SK-N-SH (cell line): ENCODE measurements at regions of chr10 and their contacts with region 1.

Region 1: DNA sequence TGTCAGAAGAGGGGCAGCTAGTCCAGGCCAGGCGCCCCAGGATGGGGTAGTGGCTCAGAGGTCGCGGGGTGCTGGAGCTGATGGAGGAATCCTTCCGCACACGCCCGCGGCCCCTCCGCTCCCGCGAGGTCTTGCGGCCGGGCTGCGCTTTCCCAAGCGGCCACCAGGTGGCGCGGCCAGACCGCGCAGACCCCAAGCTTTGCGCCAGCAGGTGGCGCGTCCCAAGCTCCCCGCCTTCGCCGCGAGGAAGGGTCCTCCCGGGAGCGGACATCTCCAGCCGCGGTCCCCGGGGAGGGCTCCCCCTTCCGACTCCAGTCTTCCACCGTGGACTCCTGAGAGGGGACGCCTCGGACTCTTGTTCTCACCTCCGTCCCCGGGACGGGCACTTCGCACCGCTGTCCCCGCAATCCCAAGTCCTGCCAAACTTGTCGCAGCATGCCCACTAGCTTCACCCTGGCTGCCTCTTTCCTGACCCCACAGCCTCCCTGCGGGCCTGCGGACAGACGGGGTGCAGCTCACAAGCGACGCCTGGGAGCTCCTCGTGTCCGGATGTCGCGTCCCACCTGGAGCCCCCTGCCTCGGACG is 19.4 kb downstream of the KCNK18 start:
- DNase-seq: peak; percentile 94
- H3K4me3 ChIP-seq: peak overlapping the region; percentile 59 to 66
- H3K27ac ChIP-seq: no peak overlapping the region
- H3K4me1 ChIP-seq: peaks cover 0 to 17% of the 10 kb centered on the region in 2 experiments; a peak in 1 of 4 replicates
- H3K27me3 ChIP-seq: no peaks in the 10 kb centered on the region
- CTCF ChIP-seq: peak; percentile 94
- EP300 ChIP-seq: no peak
- RAD21 ChIP-seq: peak; percentile 90

Region 2: DNA sequence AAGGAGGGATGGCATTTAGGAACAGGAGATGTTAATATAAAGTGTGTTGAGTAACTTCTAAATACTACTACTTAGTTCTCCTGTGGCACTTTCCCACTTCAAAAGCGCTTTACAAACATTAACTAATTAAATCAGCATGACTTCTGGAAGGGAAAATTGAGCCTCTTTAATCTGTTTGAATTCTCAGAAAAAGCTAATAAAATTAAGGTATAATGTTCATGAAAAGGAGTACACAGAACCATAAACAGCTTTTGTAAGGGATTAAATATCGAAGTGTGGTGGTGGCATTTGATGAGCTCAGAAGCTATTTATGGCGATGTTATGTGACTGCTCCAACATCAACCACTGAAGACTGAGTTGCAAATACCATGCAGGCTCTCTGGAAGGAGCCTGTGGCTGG is 68.4 kb before region 1 on chr10:
- CTCF ChIA-PET with region 1: no interaction called
- POLR2A ChIA-PET with region 1: no interaction called
- DNase-seq: no peak
- H3K4me3 ChIP-seq: no peak overlapping the region
- H3K27ac ChIP-seq: no peak overlapping the region
- H3K4me1 ChIP-seq: no peaks in the 10 kb centered on the region; a peak in 1 of 4 replicates
- H3K27me3 ChIP-seq: peaks cover 3% of the 10 kb centered on the region; the same call in 1 of the 2 replicates
- CTCF ChIP-seq: no peak
- EP300 ChIP-seq: no peak
- RAD21 ChIP-seq: no peak

Region 3: DNA sequence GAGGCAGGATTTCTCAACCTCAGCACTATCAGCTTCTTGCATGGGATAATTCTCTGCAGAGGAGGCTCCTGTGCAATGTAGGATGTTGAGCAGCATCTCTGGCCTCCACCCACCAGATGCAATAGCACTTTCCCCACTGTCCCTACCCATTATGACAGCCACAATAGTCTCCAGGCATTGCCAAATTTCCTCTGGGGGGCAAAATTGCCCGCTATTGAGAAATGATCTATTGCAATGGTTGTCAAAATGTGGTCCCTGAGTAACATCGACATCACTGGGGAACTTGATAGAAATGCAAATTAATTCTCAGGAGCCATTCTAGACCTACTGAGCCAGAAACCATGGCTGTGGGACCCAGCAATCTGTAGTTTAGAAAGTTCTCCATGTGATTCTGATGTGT is 12.4 kb before region 1 on chr10:
- CTCF ChIA-PET with region 1: interaction called, 71 read pairs
- POLR2A ChIA-PET with region 1: interaction called, 3 read pairs
- DNase-seq: no peak
- H3K4me3 ChIP-seq: no peak overlapping the region
- H3K27ac ChIP-seq: no peak overlapping the region
- H3K4me1 ChIP-seq: no peaks in the 10 kb centered on the region
- H3K27me3 ChIP-seq: no peaks in the 10 kb centered on the region
- CTCF ChIP-seq: no peak
- EP300 ChIP-seq: no peak
- RAD21 ChIP-seq: no peak

Region 4: GRCh38 chr10:117249493-117250093 is 32.9 kb after region 1 on chr10:
- CTCF ChIA-PET with region 1: interaction called, 38 read pairs
- POLR2A ChIA-PET with region 1: no interaction called
- DNase-seq: no peak
- H3K4me3 ChIP-seq: no peak overlapping the region
- H3K27ac ChIP-seq: peak overlapping the region in 1 of 2 experiments; percentile 51; a peak in 1 of 4 replicates
- H3K4me1 ChIP-seq: peaks cover 0 to 12% of the 10 kb centered on the region in 2 experiments; a peak in 2 of 4 replicates
- H3K27me3 ChIP-seq: no peaks in the 10 kb centered on the region; the same call in 1 of the 2 replicates
- CTCF ChIP-seq: no peak
- EP300 ChIP-seq: no peak
- RAD21 ChIP-seq: no peak

Region 5: GRCh38 chr10:117284716-117285494 is 68.2 kb after region 1 on chr10:
- CTCF ChIA-PET with region 1: interaction called, 35 read pairs
- POLR2A ChIA-PET with region 1: no interaction called
- DNase-seq: no peak
- H3K4me3 ChIP-seq: no peak overlapping the region
- H3K27ac ChIP-seq: no peak overlapping the region
- H3K4me1 ChIP-seq: no peaks in the 10 kb centered on the region
- H3K27me3 ChIP-seq: no peaks in the 10 kb centered on the region
- CTCF ChIP-seq: no peak
- EP300 ChIP-seq: no peak
- RAD21 ChIP-seq: no peak

Region 6: GRCh38 chr10:117342641-117343040 is 125.9 kb after region 1 on chr10:
- CTCF ChIA-PET with region 1: interaction called, 10 read pairs
- POLR2A ChIA-PET with region 1: no interaction called
- DNase-seq: no peak
- H3K4me3 ChIP-seq: no peak overlapping the region
- H3K27ac ChIP-seq: peak overlapping the region in 1 of 2 experiments; percentile 25; a peak in 2 of 4 replicates
- H3K4me1 ChIP-seq: peaks cover 0 to 7% of the 10 kb centered on the region in 2 experiments; a peak in 1 of 4 replicates
- H3K27me3 ChIP-seq: no peaks in the 10 kb centered on the region
- CTCF ChIP-seq: no peak
- EP300 ChIP-seq: no peak
- RAD21 ChIP-seq: no peak

Region 7: DNA sequence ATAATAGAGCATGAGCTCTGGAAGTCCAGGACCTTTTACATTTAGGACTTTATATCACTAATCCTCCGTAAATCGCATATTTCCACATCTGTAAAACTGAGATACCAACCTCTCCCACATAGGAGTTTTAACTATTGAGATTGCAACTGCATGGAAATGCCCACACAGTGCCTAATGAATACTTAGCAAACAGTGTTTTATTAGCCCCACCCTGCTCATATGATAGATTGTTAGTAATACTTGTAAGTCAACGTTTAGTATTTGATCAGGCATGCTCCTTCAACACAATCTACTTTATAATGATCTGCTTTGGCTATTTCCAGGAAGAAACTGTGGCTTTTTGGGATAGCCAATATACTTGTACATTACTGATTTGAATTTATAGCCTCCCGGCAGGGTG is 150.0 kb after region 1 on chr10:
- CTCF ChIA-PET with region 1: interaction called, 14 read pairs
- POLR2A ChIA-PET with region 1: no interaction called
- DNase-seq: no peak
- H3K4me3 ChIP-seq: no peak overlapping the region
- H3K27ac ChIP-seq: no peak overlapping the region
- H3K4me1 ChIP-seq: peaks cover 0 to 26% of the 10 kb centered on the region in 2 experiments; a peak in 3 of 4 replicates
- H3K27me3 ChIP-seq: no peaks in the 10 kb centered on the region
- CTCF ChIP-seq: no peak
- EP300 ChIP-seq: no peak
- RAD21 ChIP-seq: no peak

Region 8: GRCh38 chr10:117562220-117562619 is 345.5 kb after region 1 on chr10:
- CTCF ChIA-PET with region 1: no interaction called
- POLR2A ChIA-PET with region 1: no interaction called
- DNase-seq: no peak
- H3K4me3 ChIP-seq: no peak overlapping the region
- H3K27ac ChIP-seq: no peak overlapping the region
- H3K4me1 ChIP-seq: no peaks in the 10 kb centered on the region
- H3K27me3 ChIP-seq: no peaks in the 10 kb centered on the region
- CTCF ChIP-seq: no peak
- EP300 ChIP-seq: no peak
- RAD21 ChIP-seq: no peak